ENCODE measurements at regions of chr10 and their contacts with region 1.

Region 1: DNA sequence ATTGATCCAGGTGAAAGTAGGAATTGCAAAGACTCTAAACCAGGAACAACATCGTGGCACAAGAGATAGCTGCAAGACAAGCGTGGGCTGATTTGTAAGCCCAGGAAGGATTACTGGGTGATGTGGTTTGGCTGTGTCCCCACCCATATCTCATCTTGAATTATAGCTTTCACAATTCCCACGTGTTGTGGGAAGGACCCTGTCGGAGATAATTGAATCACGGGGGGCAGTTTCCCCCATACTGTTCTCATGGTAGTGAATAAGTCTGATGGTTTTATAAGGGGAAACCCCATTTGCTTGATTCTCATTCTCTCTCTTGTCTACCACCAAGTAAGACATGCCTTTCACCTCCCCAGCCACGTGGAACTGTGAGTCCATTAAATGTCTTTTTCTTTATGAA is 59.5 kb downstream of the ST8SIA6 start:
- DNase-seq: no peak
- ATAC-seq: no peak
- H3K4me3 ChIP-seq: no peak overlapping the region
- H3K4me3 Mint-ChIP-seq: no peak overlapping the region
- H3K27ac ChIP-seq: no peak overlapping the region
- H3K27ac Mint-ChIP-seq: no peak overlapping the region
- H3K4me1 ChIP-seq: no peaks in the 10 kb centered on the region
- H3K4me1 Mint-ChIP-seq: no peaks in the 10 kb centered on the region
- H3K27me3 ChIP-seq: peaks cover 0 to 5% (median 3%) of the 10 kb centered on the region in 4 experiments
- H3K27me3 Mint-ChIP-seq: peaks cover 16% of the 10 kb centered on the region
- CTCF ChIP-seq: no peak

Region 2: DNA sequence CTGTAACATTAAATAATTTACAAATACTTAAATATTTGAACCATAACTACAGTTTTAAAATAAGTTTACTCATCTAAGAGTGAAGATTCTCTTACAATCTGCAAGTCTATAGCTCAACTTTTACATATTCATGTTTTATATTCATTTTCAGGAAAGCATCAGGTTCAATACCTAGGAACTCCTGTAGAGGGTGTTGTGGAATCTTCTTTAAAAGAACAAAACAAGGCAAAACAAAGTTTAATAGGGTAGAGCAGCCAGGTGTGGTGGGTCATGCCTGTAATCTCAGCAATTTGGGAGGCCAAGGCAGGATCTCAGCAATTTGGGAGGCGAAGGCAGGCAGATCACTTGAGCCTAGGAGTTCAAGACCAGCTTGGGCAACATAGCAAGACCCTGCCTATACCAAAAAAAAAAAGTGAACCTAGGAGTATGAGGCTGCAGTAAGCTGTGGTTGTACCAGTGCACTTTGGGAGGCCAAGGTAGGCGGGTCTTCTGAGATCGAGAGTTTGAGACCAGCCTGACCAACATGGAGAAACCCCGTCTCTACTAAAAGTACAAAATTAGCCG is 14.4 kb after region 1 on chr10:
- CTCF ChIA-PET with region 1: no interaction called
- POLR2A ChIA-PET with region 1: no interaction called
- intact Hi-C with region 1: no loop called
- DNase-seq: no peak
- ATAC-seq: no peak
- H3K4me3 ChIP-seq: no peak overlapping the region
- H3K4me3 Mint-ChIP-seq: no peak overlapping the region
- H3K27ac ChIP-seq: no peak overlapping the region
- H3K27ac Mint-ChIP-seq: no peak overlapping the region
- H3K4me1 ChIP-seq: no peaks in the 10 kb centered on the region
- H3K4me1 Mint-ChIP-seq: no peaks in the 10 kb centered on the region
- H3K27me3 ChIP-seq: peaks cover 0 to 5% (median 0%) of the 10 kb centered on the region in 4 experiments
- H3K27me3 Mint-ChIP-seq: peaks cover 9% of the 10 kb centered on the region
- CTCF ChIP-seq: peak; percentile 18

Region 3: GRCh38 chr10:17643755-17644484 is 249.1 kb after region 1 on chr10 and contains the start of gene STAM:
- CTCF ChIA-PET with region 1: no interaction called
- POLR2A ChIA-PET with region 1: no interaction called
- intact Hi-C with region 1: no loop called
- DNase-seq: peak; percentile 96
- ATAC-seq: peak; percentile 90
- H3K4me3 ChIP-seq: peak within 1 kb of the TSS; percentile 71 to 99 (median 86)
- H3K4me3 Mint-ChIP-seq: peak within 1 kb of the TSS; percentile 98
- H3K27ac ChIP-seq: peak within 1 kb of the TSS; percentile 96 to 99
- H3K27ac Mint-ChIP-seq: peak within 1 kb of the TSS; percentile 100
- H3K4me1 ChIP-seq: peaks cover 35 to 43% of the 10 kb centered on the region in 2 donors
- H3K4me1 Mint-ChIP-seq: peaks cover 51% of the 10 kb centered on the region
- H3K27me3 ChIP-seq: no peaks in the 10 kb centered on the region
- H3K27me3 Mint-ChIP-seq: no peaks in the 10 kb centered on the region
- CTCF ChIP-seq: no peak
- total RNA-seq, gene STAM: 31.6 and 35.1 TPM in 2 replicates

Region 4: GRCh38 chr10:18760836-18761235 is 1366.0 kb after region 1 on chr10:
- CTCF ChIA-PET with region 1: no interaction called
- POLR2A ChIA-PET with region 1: no interaction called
- intact Hi-C with region 1: loop called (anchors 5 kb)
- DNase-seq: no peak
- ATAC-seq: no peak
- H3K4me3 ChIP-seq: no peak overlapping the region
- H3K4me3 Mint-ChIP-seq: no peak overlapping the region
- H3K27ac ChIP-seq: no peak overlapping the region
- H3K27ac Mint-ChIP-seq: no peak overlapping the region
- H3K4me1 ChIP-seq: no peaks in the 10 kb centered on the region
- H3K4me1 Mint-ChIP-seq: no peaks in the 10 kb centered on the region
- H3K27me3 ChIP-seq: no peaks in the 10 kb centered on the region
- H3K27me3 Mint-ChIP-seq: no peaks in the 10 kb centered on the region
- CTCF ChIP-seq: no peak

Measured in B cell (primary cell).